ENCODE measurements at regions of chr12 and their contacts with region 1.

Region 1: GRCh38 chr12:48795480-48796455 is 6.9 kb upstream of the ADCY6 start:
- DNase-seq: peak; percentile 85 to 86
- H3K4me3 ChIP-seq: no peak overlapping the region
- H3K4me3 Mint-ChIP-seq: peak overlapping the region; percentile 49
- H3K27ac Mint-ChIP-seq: peak overlapping the region; percentile 34
- H3K4me1 ChIP-seq: peaks cover 25% of the 10 kb centered on the region
- H3K4me1 Mint-ChIP-seq: peaks cover 9% of the 10 kb centered on the region
- H3K27me3 ChIP-seq: no peaks in the 10 kb centered on the region
- H3K27me3 Mint-ChIP-seq: no peaks in the 10 kb centered on the region
- CTCF ChIP-seq: peak; percentile 97 to 98

Region 2: GRCh38 chr12:48542300-48542928 is 253.4 kb before region 1 on chr12:
- CTCF ChIA-PET with region 1: interaction called, 3 read pairs
- POLR2A ChIA-PET with region 1: no interaction called
- intact Hi-C with region 1: loop called (anchors 2 kb)
- DNase-seq: peak; percentile 57 to 66
- H3K4me3 ChIP-seq: no peak overlapping the region
- H3K4me3 Mint-ChIP-seq: no peak overlapping the region
- H3K27ac Mint-ChIP-seq: no peak overlapping the region
- H3K4me1 ChIP-seq: no peaks in the 10 kb centered on the region
- H3K4me1 Mint-ChIP-seq: no peaks in the 10 kb centered on the region
- H3K27me3 ChIP-seq: no peaks in the 10 kb centered on the region
- H3K27me3 Mint-ChIP-seq: peaks cover 11% of the 10 kb centered on the region
- CTCF ChIP-seq: peak; percentile 57 to 90

Region 3: GRCh38 chr12:48690990-48691389 is 104.8 kb before region 1 on chr12:
- CTCF ChIA-PET with region 1: no interaction called
- POLR2A ChIA-PET with region 1: no interaction called
- intact Hi-C with region 1: no loop called
- DNase-seq: no peak
- H3K4me3 ChIP-seq: no peak overlapping the region
- H3K4me3 Mint-ChIP-seq: no peak overlapping the region
- H3K27ac Mint-ChIP-seq: no peak overlapping the region
- H3K4me1 ChIP-seq: 0 out of 2 replicates have a peak, but pooled peaks cover 6% of the 10 kb centered on the region
- H3K4me1 Mint-ChIP-seq: no peaks in the 10 kb centered on the region
- H3K27me3 ChIP-seq: no peaks in the 10 kb centered on the region
- H3K27me3 Mint-ChIP-seq: no peaks in the 10 kb centered on the region
- CTCF ChIP-seq: no peak

Region 4: DNA sequence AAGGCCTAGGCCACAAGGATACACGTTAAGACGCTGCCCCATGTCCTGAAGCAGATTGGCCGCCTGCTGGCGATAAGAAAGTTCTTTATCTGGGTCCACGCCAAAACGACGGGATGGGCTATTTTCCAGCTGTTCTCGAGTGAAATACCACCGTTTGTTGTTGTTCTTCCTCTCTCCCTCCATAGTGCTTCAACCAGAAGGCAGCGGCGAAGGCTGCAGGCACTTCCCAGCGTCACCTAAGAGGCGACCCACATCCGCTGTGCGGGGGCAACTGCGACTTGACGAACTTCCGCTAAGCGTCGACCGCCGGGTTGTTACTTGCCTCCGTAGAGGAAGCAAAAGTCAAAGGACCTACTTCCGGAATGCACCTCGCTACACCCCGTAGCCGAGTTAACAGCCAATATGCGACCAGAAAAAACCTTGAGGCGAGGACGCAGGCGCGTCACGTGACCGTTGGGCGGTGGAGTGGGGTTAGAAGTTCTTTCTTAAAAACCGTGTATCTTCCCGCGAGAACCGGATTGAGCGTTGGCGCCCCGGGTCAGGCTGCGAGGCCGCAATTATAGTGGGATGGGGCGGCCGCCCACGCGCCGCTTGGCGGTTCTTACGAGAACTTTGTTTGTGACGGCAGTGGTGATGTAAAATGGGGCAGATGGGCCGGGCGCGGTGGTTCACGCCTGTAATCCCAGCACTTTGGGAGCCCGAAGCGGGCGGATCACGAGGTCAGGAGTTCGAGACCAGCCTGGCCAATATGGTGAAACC is 79.1 kb before region 1 on chr12 and contains the start of gene CCNT1:
- CTCF ChIA-PET with region 1: interaction called, 3 read pairs
- POLR2A ChIA-PET with region 1: no interaction called
- intact Hi-C with region 1: loop called (anchors 1 kb)
- DNase-seq: peak; percentile 100
- H3K4me3 ChIP-seq: peak within 1 kb of the TSS; percentile 66
- H3K4me3 Mint-ChIP-seq: peak within 1 kb of the TSS; percentile 88
- H3K27ac Mint-ChIP-seq: peak within 1 kb of the TSS; percentile 98
- H3K4me1 ChIP-seq: peaks cover 10% of the 10 kb centered on the region; the same call in 1 of the 2 replicates
- H3K4me1 Mint-ChIP-seq: no peaks in the 10 kb centered on the region
- H3K27me3 ChIP-seq: no peaks in the 10 kb centered on the region
- H3K27me3 Mint-ChIP-seq: no peaks in the 10 kb centered on the region
- CTCF ChIP-seq: peak in 1 of 2 experiments; percentile 44
- total RNA-seq, gene CCNT1: 52.1 and 53.1 TPM in 2 replicates

Region 5: GRCh38 chr12:48750769-48751735 is 44.7 kb before region 1 on chr12:
- CTCF ChIA-PET with region 1: interaction called, 148 read pairs
- POLR2A ChIA-PET with region 1: interaction called, 13 read pairs
- intact Hi-C with region 1: loop called (anchors 1 kb)
- DNase-seq: no peak
- H3K4me3 ChIP-seq: no peak overlapping the region
- H3K4me3 Mint-ChIP-seq: no peak overlapping the region
- H3K27ac Mint-ChIP-seq: no peak overlapping the region
- H3K4me1 ChIP-seq: peaks cover 9% of the 10 kb centered on the region
- H3K4me1 Mint-ChIP-seq: peaks cover 7% of the 10 kb centered on the region
- H3K27me3 ChIP-seq: no peaks in the 10 kb centered on the region
- H3K27me3 Mint-ChIP-seq: no peaks in the 10 kb centered on the region
- CTCF ChIP-seq: no peak

Region 6: DNA sequence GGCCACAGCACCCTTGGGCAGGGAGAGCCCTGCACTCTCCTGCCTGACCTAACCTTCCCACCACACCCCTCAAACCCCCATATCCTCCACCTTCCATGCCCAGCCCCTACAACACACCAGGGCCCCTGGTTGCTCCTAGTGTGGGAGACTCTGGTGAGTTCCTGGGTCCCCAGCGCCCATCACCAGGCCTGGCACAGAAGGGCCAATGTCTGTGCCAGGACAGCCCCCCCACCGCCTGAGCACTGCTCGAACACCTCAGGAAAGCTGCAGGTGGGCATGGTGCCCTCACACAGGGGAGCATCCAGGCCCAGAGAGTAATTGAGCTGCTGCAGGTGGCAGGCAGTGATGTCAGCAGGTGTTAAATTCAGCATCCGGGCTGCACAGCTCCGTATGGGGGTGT is 22.1 kb before region 1 on chr12:
- CTCF ChIA-PET with region 1: no interaction called
- POLR2A ChIA-PET with region 1: no interaction called
- intact Hi-C with region 1: loop called (anchors 2 kb)
- DNase-seq: no peak
- H3K4me3 ChIP-seq: no peak overlapping the region
- H3K4me3 Mint-ChIP-seq: no peak overlapping the region
- H3K27ac Mint-ChIP-seq: no peak overlapping the region
- H3K4me1 ChIP-seq: no peaks in the 10 kb centered on the region
- H3K4me1 Mint-ChIP-seq: no peaks in the 10 kb centered on the region
- H3K27me3 ChIP-seq: no peaks in the 10 kb centered on the region
- H3K27me3 Mint-ChIP-seq: no peaks in the 10 kb centered on the region
- CTCF ChIP-seq: no peak

Region 7: GRCh38 chr12:48814262-48815125 is 18.7 kb after region 1 on chr12:
- CTCF ChIA-PET with region 1: interaction called, 18 read pairs
- POLR2A ChIA-PET with region 1: no interaction called
- intact Hi-C with region 1: no loop called
- DNase-seq: peak; percentile 83 to 96
- H3K4me3 ChIP-seq: peak overlapping the region; percentile 91
- H3K4me3 Mint-ChIP-seq: peak overlapping the region; percentile 97
- H3K27ac Mint-ChIP-seq: peak overlapping the region; percentile 58
- H3K4me1 ChIP-seq: peaks cover 21% of the 10 kb centered on the region
- H3K4me1 Mint-ChIP-seq: peaks cover 18% of the 10 kb centered on the region
- H3K27me3 ChIP-seq: no peaks in the 10 kb centered on the region
- H3K27me3 Mint-ChIP-seq: no peaks in the 10 kb centered on the region
- CTCF ChIP-seq: peak; percentile 99

Region 8: GRCh38 chr12:49055981-49056754 is 260.4 kb after region 1 on chr12:
- CTCF ChIA-PET with region 1: no interaction called
- POLR2A ChIA-PET with region 1: no interaction called
- intact Hi-C with region 1: no loop called
- DNase-seq: peak; percentile 35 to 45
- H3K4me3 ChIP-seq: no peak overlapping the region
- H3K4me3 Mint-ChIP-seq: peak overlapping the region; percentile 26
- H3K27ac Mint-ChIP-seq: peak overlapping the region; percentile 12
- H3K4me1 ChIP-seq: peaks cover 17% of the 10 kb centered on the region
- H3K4me1 Mint-ChIP-seq: peaks cover 16% of the 10 kb centered on the region
- H3K27me3 ChIP-seq: no peaks in the 10 kb centered on the region
- H3K27me3 Mint-ChIP-seq: no peaks in the 10 kb centered on the region
- CTCF ChIP-seq: no peak

Measured in Caco-2 (cell line).